ENCODE measurements at regions of chr18 and their contacts with region 1.

Region 1: DNA sequence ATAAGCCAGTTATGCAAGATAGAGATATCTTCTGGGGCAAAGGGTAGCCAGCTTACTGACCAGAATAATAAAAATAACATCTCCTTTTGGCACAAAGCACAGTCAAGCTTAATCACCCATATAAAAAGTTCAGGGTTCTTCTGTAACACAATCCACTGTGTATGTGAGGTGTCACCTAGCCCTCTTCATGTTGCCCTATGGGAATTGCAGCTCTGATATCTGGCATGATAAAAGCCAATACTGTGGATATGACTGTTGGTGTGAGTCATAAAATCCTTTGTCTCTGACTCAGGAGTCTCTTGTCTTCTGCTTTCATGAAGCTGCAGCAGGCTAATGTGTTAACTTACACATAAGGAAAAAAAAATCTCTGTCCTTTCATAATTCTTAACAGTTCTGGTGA is 90.8 kb downstream of the DSEL start:
- DNase-seq: no peak
- H3K4me3 ChIP-seq: no peak overlapping the region
- H3K27ac ChIP-seq: no peak overlapping the region
- H3K4me1 ChIP-seq: no peaks in the 10 kb centered on the region
- H3K27me3 ChIP-seq: no peaks in the 10 kb centered on the region
- CTCF ChIP-seq: no peak

Region 2: DNA sequence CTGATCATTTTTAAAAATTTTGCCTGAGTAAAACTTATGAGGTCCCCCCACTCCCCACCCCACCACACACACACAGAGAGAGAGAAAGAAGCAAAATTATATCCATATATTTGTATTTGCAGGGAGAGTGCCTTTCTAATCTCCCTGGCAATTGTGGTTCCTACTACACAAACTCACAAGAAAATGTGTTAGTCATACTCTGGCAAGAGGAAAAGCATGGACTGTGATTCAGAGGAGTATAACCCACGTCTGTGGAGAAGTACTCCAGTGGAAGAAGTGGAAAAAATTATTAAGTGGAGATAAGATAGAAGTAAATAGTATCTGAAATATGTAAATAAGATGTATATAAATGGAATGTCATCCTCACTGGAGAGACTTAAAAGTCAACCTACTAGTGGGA is 23.2 kb before region 1 on chr18:
- CTCF ChIA-PET with region 1: no interaction called
- POLR2A ChIA-PET with region 1: no interaction called
- intact Hi-C with region 1: loop called (anchors 1 kb)
- DNase-seq: no peak
- H3K4me3 ChIP-seq: no peak overlapping the region
- H3K27ac ChIP-seq: no peak overlapping the region
- H3K4me1 ChIP-seq: no peaks in the 10 kb centered on the region
- H3K27me3 ChIP-seq: no peaks in the 10 kb centered on the region
- CTCF ChIP-seq: no peak

Region 3: DNA sequence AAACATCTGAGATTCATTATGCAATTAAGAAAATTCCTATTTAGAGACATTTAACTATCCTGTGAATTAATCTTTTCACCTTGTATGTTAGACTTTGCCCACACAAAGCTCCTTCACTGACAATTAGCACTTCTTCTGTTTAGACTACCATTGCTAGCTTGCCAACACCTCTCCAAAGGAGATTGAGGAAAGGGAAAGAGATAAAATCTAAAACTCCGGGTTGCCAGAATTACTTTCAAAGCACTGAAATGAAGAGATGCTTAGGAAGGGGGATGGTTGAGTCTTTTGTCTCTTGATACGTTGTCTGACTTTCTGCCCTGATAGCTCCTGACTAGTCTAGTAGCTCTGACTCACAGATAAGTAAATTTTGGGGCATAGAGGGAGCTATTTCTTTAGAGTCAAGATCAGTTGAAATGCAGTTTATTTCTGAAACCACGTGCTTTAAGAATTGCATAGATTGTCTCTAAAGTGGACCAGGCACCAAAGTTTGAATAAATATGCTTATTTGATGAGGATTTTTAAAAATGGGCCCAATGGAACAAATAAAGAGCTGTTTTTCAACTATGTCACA is 164.9 kb after region 1 on chr18:
- CTCF ChIA-PET with region 1: no interaction called
- POLR2A ChIA-PET with region 1: no interaction called
- intact Hi-C with region 1: no loop called
- DNase-seq: peak; percentile 76
- H3K4me3 ChIP-seq: no peak overlapping the region
- H3K27ac ChIP-seq: no peak overlapping the region
- H3K4me1 ChIP-seq: peaks cover 7% of the 10 kb centered on the region
- H3K27me3 ChIP-seq: no peaks in the 10 kb centered on the region
- CTCF ChIP-seq: peak; percentile 45

Measured in A673 (cell line).